Spleen (tissue), 13 donors: ENCODE measurements at regions of chr1 and their contacts with region 1.

Region 1: DNA sequence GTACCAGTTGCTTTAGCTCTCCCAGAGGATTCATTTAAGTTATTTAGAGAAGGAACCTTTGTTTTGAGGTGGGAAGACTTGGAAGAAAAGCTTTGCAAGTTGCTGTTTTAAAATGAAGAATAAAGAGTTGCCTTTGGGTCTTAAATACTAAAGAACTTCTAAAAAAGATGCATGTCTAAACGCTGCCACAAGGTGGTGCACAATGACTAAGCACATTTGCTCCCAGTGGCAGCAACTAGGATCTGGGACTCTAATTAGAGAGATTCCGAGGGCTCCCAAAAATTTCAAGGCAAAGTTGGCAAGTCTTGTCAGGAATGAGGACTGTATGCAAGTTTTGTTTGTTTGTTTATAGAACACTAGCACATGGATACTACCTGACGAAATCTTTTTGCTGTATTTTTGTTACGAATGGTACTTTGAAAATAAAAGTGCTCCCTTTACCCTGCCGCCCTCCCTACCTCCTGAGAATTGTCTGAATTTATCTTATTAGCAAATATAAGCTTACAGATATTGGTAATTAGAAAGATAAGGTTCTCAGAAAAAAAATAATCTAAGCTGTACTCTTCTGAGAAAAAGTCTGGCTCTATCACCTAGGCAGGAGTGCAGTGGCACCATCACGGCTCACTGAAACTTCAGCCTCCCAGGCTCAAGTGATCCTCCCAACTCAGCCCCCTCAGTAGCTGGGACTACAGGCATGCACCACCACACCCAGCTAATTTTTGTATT is 121.8 kb downstream of the HFM1 start:
- DNase-seq: no peak
- H3K4me3 ChIP-seq: peak overlapping the region in 2 of 8 donors; percentile 21 to 44
- H3K27ac ChIP-seq: no peak overlapping the region
- H3K4me1 ChIP-seq: peaks cover 0 to 11% (median 6%) of the 10 kb centered on the region in 6 donors
- H3K27me3 ChIP-seq: no peaks in the 10 kb centered on the region
- CTCF ChIP-seq: peak; percentile 28 to 74 (median 68)
- POLR2A ChIP-seq: no peak

Region 2: GRCh38 chr1:90977522-90977921 is 305.3 kb before region 1 on chr1:
- intact Hi-C with region 1: no loop called
- DNase-seq: no peak
- H3K4me3 ChIP-seq: no peak overlapping the region
- H3K27ac ChIP-seq: no peak overlapping the region
- H3K4me1 ChIP-seq: peaks cover 0 to 27% (median 1%) of the 10 kb centered on the region in 6 donors
- H3K27me3 ChIP-seq: no peaks in the 10 kb centered on the region
- CTCF ChIP-seq: no peak
- POLR2A ChIP-seq: no peak

Region 3: DNA sequence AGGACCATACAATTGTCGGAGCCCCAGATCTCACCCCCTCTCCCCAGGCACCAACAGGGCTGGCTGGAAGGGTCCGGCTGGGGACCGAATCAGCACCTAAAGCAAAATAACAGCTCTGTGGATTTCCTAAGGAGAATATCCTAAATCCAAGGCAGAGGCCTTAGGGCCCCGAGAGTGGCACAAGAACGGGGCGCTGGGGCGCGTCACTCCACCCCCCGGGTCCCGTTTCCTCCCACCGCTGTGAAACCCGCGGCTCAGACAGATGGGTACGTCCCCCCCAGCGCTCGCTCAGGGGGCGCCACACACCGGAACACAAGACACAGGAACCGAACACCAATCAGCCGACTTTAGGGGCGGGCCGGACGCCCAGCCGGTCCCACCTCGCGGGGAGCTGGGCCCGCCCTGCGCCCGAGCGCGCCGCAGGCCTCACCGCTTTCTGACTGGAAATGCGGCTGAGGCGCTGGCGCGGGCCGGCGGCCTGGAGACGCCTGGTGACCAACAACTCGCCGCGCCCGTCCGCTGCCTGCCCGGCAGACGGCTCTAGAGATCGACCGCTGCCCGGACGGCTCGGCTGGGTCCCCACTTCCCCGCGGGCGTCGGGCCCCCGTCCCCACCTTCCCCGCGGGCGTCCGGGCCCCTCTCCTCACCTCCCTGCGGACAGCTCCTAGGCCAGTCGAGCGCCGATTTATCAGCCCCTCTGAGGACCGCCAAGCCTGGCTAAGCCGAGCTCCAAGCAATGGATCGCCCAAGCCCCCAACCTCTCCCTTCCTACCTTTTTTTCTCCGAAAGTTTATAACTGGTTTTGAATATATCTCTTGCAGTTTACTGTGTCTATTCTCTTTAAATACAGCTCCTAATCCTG is 121.5 kb after region 1 on chr1 and contains the start of gene HFM1:
- intact Hi-C with region 1: loop called (anchors 10 kb)
- DNase-seq: peak; percentile 88
- H3K4me3 ChIP-seq: peak within 1 kb of the TSS; percentile 37 to 70 (median 43)
- H3K27ac ChIP-seq: peak within 1 kb of the TSS; percentile 58 to 88 (median 82)
- H3K4me1 ChIP-seq: peaks cover 0 to 17% (median 9%) of the 10 kb centered on the region in 6 donors
- H3K27me3 ChIP-seq: peaks cover 0 to 29% (median 8%) of the 10 kb centered on the region in 7 donors
- CTCF ChIP-seq: peak in 1 of 11 experiments; percentile 9
- POLR2A ChIP-seq: peak in 1 of 3 donors; percentile 17
- total RNA-seq, gene HFM1: 0.43 to 2.3 (median 0.89) TPM

Region 4: DNA sequence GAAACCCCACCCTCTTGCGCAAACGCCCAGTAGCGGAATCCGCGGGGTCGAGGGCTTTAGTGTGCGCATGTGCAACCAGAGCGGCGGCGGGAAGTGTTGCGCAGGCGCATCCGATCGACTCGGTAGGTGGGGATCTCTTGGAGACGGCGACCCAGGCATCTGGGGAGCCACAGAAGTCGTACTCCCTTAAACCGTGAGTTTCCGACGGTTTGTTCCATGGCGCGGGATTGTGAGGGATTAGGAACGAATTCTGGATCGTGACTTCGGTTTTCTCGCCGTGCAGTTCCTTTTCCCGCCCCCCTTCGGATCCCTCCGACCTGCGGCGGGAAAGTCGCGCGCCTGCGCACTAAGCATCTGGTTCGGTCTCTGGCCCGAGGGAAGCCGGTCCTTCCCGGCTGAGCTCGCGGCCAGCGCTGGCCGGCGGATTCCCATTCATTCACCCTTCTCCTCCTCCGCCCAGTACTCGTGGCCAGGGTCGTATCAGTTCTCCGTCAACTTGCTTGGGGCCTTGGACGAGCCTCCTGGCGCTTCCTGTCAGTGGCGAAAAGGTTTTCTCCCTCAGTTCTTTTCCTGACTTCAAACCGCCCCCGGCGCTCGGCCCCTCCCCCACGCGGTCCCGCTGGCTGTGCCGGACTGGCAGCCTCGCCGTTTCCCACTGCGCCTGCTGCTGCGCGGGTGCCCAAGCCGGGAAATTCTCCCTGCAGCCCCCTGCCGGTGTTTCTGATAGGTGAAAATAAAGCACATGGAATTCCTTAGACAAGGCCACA is 218.1 kb after region 1 on chr1 and contains the start of gene CDC7:
- intact Hi-C with region 1: loop called (anchors 10 kb)
- DNase-seq: peak; percentile 94
- H3K4me3 ChIP-seq: peak within 1 kb of the TSS; percentile 68 to 97 (median 84)
- H3K27ac ChIP-seq: peak within 1 kb of the TSS; percentile 48 to 91 (median 88)
- H3K4me1 ChIP-seq: peaks cover 0 to 55% (median 34%) of the 10 kb centered on the region in 6 donors
- H3K27me3 ChIP-seq: no peaks in the 10 kb centered on the region
- CTCF ChIP-seq: peak in 8 of 11 experiments; percentile 5 to 43 (median 26)
- POLR2A ChIP-seq: no peak
- total RNA-seq, gene CDC7: 8.0 to 25.3 (median 12.5) TPM

Region 5: DNA sequence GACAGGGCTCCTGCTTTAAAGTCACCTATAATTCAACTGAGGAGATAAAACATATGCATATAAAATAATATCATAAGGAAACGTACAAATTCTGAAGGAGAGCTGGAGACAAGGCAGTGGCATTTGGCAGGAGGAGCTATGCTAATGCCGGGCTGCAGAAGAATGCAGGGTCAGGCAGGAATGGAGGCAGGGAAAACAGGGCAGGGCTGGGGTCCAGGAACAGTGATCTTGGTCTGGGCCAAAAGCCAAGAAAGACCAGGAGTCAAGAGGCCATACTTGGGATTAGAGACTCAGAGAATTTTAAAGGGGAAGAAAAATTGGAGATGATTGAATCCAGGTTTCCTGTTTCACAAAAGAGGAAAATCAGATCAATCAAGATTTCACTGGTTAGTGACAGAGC is 646.4 kb after region 1 on chr1:
- intact Hi-C with region 1: loop called (anchors 5 kb)
- DNase-seq: peak; percentile 46
- H3K4me3 ChIP-seq: no peak overlapping the region
- H3K27ac ChIP-seq: no peak overlapping the region
- H3K4me1 ChIP-seq: peaks cover 0 to 14% (median 3%) of the 10 kb centered on the region in 6 donors
- H3K27me3 ChIP-seq: no peaks in the 10 kb centered on the region
- CTCF ChIP-seq: no peak
- POLR2A ChIP-seq: no peak